WTC11 (cell line): ENCODE measurements at regions of chr16 and their contacts with region 1.

Region 1: DNA sequence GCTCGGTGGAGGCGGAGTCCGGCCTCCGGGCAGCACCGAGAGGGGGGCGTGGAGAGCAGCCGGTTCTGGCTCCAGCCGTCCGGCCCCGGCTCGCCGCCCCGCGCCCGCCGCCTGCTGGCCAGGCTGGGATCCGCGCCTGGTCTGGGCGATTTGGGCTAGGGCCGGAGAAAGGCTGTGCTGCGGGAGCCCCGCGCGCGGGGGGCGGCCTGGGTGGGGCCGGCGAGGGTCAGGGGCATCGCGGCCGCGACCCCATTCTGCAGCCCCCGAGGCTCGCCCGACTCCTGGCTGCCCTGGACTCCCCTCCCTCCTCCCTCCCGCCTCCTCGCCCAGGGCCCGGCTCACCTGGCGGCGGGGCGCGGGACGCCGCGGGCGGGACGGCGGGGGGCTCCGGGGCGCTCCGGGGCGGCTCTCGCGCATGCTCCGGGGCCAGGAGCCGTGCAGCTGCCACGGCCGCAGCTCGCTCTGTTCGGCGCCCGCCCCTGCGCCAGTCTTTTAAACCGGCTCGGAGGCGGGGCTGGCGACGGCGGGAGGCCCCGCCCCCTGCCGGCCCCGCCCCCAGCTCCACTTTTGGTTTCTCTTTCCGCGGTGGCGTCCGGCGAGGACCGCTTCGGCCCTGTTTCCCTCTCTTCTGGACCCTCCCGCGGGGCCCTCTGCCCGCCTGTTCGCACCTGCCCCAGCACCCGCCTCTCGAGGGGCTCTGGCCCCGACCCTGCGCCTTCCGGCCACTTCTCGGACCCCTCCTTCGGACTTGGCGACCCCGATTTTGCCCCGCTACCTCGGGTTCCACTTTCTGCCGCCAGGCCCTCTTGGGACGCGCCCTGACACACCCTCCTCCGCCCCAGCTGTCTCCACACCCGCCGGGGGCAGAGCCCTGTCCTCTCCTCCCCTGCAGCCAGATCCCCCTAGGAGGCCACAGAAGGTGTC is at the start of gene SOCS1:
- DNase-seq: peak; percentile 90
- ATAC-seq: peak; percentile 62
- H3K4me3 Mint-ChIP-seq: peak within 1 kb of the TSS; percentile 87
- H3K27ac Mint-ChIP-seq: peak within 1 kb of the TSS; percentile 95
- H3K4me1 Mint-ChIP-seq: peaks cover 44% of the 10 kb centered on the region
- H3K27me3 Mint-ChIP-seq: no peaks in the 10 kb centered on the region; the same call in 1 of the 2 replicates
- CTCF ChIP-seq: peak; percentile 85
- total RNA-seq, gene SOCS1: 62.3 to 67.1 TPM (median 62.5 TPM) in 3 replicates

Region 2: DNA sequence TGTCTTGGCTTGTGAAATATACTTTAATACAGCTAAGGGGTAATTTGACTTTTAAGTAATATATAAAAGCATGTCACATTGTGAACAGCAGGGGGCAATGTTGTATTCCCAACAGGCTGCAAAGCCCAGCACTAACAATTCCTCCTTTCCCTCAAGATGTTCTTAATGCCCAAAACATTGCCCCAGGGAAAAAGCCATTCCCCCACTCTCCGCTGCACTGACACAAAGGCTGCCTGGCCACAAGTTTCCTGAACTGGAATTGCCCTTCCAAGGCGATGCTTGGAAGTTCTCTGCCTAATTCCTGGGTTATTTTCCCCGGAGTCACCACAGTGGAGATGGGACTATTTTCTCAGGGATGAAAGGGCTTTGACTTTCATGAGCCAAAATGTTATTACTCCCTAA is 284.4 kb before region 1 on chr16:
- CTCF ChIA-PET with region 1: interaction called, 16 read pairs
- POLR2A ChIA-PET with region 1: no interaction called
- DNase-seq: peak; percentile 46
- ATAC-seq: peak; percentile 90
- H3K4me3 Mint-ChIP-seq: no peak overlapping the region
- H3K27ac Mint-ChIP-seq: no peak overlapping the region
- H3K4me1 Mint-ChIP-seq: peaks cover 5% of the 10 kb centered on the region
- H3K27me3 Mint-ChIP-seq: no peaks in the 10 kb centered on the region
- CTCF ChIP-seq: peak; percentile 43

Region 3: GRCh38 chr16:11273721-11274324 is 17.8 kb after region 1 on chr16:
- CTCF ChIA-PET with region 1: interaction called, 22 read pairs
- POLR2A ChIA-PET with region 1: interaction called, 5 read pairs
- DNase-seq: no peak
- ATAC-seq: peak; percentile 27; the same call in 1 of the 2 replicates
- H3K4me3 Mint-ChIP-seq: no peak overlapping the region
- H3K27ac Mint-ChIP-seq: peak overlapping the region; percentile 49; the same call in 1 of the 2 replicates
- H3K4me1 Mint-ChIP-seq: peaks cover 9% of the 10 kb centered on the region
- H3K27me3 Mint-ChIP-seq: no peaks in the 10 kb centered on the region; the same call in 1 of the 2 replicates
- CTCF ChIP-seq: no peak

Region 4: DNA sequence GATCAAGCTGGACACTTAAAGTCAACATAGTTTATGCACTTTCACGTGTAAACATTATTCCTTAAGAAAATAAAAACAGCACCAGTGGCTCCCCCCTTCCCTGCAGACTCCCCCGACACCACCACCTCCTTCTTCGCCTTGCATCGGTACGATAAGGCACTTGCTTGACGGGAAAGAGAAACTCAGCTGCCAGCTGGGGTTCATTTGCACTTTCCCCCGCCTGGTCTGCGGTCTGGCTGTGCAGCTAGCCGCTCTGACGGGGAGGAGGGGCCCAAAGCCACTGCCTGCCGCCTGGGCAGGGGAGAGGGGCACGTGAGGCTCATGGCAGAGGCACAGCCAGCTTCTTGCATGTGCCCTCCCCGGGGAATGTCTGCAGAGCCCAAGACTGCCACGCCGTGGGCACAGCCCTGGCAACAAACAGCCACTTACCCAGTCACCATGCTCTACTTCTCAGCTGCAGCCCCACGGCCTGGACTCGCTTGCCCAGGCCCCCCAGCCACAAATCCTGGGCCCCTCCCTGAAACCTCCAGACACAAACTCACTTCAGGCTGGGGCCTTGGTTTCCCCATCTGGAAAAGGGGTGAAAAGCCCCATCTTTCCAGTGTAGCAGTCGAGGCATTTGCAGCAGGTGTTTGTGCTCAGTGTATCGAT is 41.6 kb after region 1 on chr16:
- CTCF ChIA-PET with region 1: interaction called, 29 read pairs
- POLR2A ChIA-PET with region 1: interaction called, 6 read pairs
- DNase-seq: peak; percentile 69
- ATAC-seq: peak; percentile 87
- H3K4me3 Mint-ChIP-seq: no peak overlapping the region
- H3K27ac Mint-ChIP-seq: no peak overlapping the region
- H3K4me1 Mint-ChIP-seq: peaks cover 33% of the 10 kb centered on the region
- H3K27me3 Mint-ChIP-seq: no peaks in the 10 kb centered on the region; the same call in 1 of the 2 replicates
- CTCF ChIP-seq: no peak

Region 5: DNA sequence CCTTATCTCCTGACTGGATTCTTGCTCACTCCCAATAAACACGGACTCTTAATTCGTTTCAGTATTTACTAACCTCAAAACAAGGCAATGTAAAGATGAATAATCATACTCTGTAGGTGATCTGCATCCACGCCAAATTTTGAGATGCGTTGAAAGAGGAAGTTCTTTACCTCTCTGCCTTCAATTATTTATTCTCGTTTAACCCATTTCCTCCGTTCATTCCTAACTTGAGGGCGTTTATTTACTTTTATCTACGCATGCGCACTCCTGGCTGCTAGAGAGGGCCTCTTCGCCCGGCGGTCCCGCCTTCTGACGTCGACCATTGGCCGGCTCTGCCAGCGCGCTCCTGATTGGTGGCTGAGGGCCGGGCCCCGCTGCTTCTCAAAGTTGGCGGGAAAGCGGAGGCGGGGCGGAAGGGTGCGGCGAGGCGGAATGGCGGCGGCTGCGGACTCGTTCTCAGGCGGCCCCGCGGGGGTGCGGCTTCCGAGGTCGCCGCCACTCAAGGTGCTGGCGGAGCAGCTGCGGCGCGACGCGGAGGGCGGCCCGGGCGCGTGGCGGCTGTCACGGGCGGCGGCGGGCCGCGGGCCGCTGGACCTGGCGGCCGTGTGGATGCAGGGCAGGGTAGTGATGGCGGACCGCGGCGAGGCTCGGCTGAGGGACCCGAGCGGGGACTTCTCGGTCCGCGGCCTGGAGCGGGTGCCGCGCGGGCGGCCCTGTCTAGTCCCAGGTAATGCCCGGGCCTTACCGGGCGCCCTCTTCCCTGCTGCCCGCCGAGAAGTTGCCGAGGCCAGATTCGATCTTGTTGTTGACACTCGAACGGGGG is 89.3 kb after region 1 on chr16 and contains the start of gene RMI2:
- CTCF ChIA-PET with region 1: interaction called, 10 read pairs
- POLR2A ChIA-PET with region 1: interaction called, 10 read pairs
- DNase-seq: peak; percentile 98
- ATAC-seq: peak; percentile 93
- H3K4me3 Mint-ChIP-seq: peak within 1 kb of the TSS; percentile 91
- H3K27ac Mint-ChIP-seq: peak within 1 kb of the TSS; percentile 98
- H3K4me1 Mint-ChIP-seq: peaks cover 66% of the 10 kb centered on the region
- H3K27me3 Mint-ChIP-seq: no peaks in the 10 kb centered on the region
- CTCF ChIP-seq: no peak
- total RNA-seq, gene RMI2: 77.2 to 83.4 TPM (median 79.0 TPM) in 3 replicates

Region 6: DNA sequence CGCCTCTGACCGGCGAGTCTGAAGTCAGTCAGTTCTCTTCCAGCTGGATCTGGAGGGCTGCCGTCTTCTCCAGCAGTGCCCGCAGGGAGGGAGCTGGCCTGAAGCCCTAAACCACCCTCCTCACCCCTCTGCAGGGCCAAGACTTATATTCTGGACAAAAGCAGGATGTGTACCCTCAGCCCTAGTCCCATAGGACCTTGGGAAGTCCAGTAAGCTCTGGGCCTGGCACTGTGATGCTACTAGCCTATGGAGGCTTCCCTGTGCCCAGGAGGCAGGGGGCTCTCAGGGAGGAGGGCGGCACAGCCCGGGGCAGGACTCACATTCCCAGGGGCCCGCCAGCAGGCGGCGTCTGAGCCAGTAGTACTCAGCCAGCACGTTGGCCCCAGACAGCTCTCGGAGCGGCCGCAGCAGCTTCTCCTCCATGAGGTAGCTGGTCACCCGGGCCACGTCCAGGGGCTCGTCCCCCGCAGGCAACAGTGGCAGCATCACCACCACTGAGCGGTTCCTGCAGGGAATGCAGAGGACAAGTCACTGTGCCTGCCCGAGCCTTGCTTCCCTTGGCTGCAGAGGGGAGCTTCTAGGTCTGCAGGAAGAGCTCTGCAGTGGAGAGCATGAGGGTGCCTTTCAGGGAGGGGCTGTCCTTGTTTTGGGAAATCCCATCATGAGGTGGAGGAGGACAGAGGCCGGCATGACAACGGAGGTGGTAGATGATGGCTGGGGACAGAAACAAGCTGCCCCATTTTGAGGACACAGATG is 131.0 kb after region 1 on chr16:
- CTCF ChIA-PET with region 1: interaction called, 12 read pairs
- POLR2A ChIA-PET with region 1: interaction called, 3 read pairs
- DNase-seq: peak; percentile 86
- ATAC-seq: peak; percentile 85
- H3K4me3 Mint-ChIP-seq: no peak overlapping the region
- H3K27ac Mint-ChIP-seq: no peak overlapping the region; the same call in 1 of the 2 replicates
- H3K4me1 Mint-ChIP-seq: peaks cover 31% of the 10 kb centered on the region
- H3K27me3 Mint-ChIP-seq: peaks cover 2% of the 10 kb centered on the region; the same call in 1 of the 2 replicates
- CTCF ChIP-seq: peak; percentile 59; the same call in 1 of the 2 replicates

Region 7: GRCh38 chr16:11423315-11424117 is 167.5 kb after region 1 on chr16:
- CTCF ChIA-PET with region 1: no interaction called
- POLR2A ChIA-PET with region 1: no interaction called
- DNase-seq: no peak
- ATAC-seq: no peak
- H3K4me3 Mint-ChIP-seq: no peak overlapping the region
- H3K27ac Mint-ChIP-seq: no peak overlapping the region
- H3K4me1 Mint-ChIP-seq: peaks cover 11% of the 10 kb centered on the region
- H3K27me3 Mint-ChIP-seq: no peaks in the 10 kb centered on the region
- CTCF ChIP-seq: no peak

Region 8: GRCh38 chr16:11470676-11471415 is 214.8 kb after region 1 on chr16:
- CTCF ChIA-PET with region 1: no interaction called
- POLR2A ChIA-PET with region 1: no interaction called
- DNase-seq: no peak
- ATAC-seq: peak; percentile 41; the same call in 1 of the 2 replicates
- H3K4me3 Mint-ChIP-seq: no peak overlapping the region
- H3K27ac Mint-ChIP-seq: peak overlapping the region; percentile 28; the same call in 1 of the 2 replicates
- H3K4me1 Mint-ChIP-seq: no peaks in the 10 kb centered on the region
- H3K27me3 Mint-ChIP-seq: no peaks in the 10 kb centered on the region
- CTCF ChIP-seq: no peak